ENCODE measurements at regions of chr10 and their contacts with region 1.

Region 1: DNA sequence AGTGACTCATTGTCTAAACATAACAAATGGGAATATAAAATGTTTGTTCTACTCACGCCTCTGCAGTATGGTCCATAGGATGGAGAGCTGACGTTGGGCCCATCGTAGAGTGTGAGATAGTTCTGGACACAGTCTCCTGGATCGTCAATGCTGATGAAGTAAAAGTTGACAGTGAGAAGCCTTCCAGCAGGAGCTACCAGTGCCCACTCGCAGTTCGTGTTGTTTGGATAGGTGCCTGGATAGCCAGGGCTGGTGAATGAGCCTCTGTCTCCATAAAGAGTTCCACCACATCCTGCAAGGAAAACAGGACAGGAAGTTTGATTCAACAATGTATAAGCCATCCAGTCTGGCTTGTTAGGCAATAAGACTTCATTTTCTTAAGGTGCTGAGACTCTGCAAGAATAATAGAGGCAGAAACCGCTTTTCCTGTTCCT is 79.6 kb downstream of the OR13A1 start:
- DNase-seq: no peak
- H3K4me3 ChIP-seq: no peak overlapping the region
- H3K27ac ChIP-seq: no peak overlapping the region
- H3K4me1 ChIP-seq: no peaks in the 10 kb centered on the region
- CTCF ChIP-seq: no peak

Region 2: DNA sequence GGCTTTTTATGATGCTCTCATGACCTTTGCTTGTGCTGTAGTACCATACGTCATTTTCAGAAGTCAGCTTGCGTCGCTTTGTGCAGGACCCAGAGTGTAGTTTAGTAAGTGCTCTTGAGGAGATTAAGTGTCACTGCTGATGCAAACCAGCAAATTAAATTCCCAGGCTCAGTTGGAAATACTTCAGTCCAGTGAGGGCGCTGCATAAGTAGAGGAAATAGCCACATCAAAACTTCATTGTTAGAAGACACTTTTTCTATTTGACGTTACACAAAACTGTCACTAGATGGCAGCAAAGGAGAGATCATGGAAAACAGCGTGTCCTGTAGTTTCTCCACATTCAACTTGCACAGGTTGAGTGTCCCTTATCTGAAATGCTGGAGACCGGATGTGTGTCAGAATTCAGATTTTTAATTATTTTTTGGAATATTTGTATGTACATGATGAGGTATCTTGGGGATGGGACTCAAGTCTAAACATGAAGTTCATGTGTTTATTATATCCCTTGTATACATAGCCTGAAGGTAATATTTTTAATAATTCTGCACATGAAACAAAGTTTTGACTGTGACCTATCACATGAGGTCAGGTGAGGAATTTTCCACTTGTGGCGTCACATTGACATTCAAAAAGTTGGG is 227.2 kb before region 1 on chr10:
- CTCF ChIA-PET with region 1: no interaction called
- POLR2A ChIA-PET with region 1: no interaction called
- intact Hi-C with region 1: loop called (anchors 2 kb)
- DNase-seq: peak; percentile 84
- H3K4me3 ChIP-seq: no peak overlapping the region
- H3K27ac ChIP-seq: no peak overlapping the region
- H3K4me1 ChIP-seq: no peaks in the 10 kb centered on the region
- CTCF ChIP-seq: peak; percentile 96

Region 3: DNA sequence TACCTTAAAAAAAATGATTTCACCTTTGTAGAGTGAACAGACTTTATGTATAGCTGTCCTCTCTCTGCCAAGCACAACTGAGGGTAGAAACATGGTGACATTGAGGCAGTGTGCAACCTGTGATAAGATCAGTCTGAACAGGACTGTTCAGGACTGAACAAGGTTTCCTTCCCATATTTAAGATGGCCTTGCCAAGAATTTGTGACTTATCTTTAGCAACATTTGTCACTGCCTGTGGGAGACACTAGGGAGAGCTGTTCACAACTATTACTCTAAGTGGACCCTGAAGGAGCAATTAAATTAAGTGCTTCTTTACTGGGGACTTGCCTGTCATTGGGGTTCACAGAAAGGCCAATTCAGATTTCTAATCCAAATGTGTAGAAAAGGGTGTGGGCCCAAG is 72.9 kb after region 1 on chr10:
- CTCF ChIA-PET with region 1: no interaction called
- POLR2A ChIA-PET with region 1: no interaction called
- intact Hi-C with region 1: no loop called
- DNase-seq: peak; percentile 44
- H3K4me3 ChIP-seq: no peak overlapping the region
- H3K27ac ChIP-seq: no peak overlapping the region
- H3K4me1 ChIP-seq: no peaks in the 10 kb centered on the region
- CTCF ChIP-seq: peak; percentile 60